ENCODE measurements at regions of chr7 and their contacts with region 1.

Region 1: GRCh38 chr7:106736508-106737201 is 75.7 kb upstream of the CCDC71L start:
- DNase-seq: peak; percentile 84
- ATAC-seq: peak; percentile 96
- H3K4me3 ChIP-seq: peak overlapping the region in 2 of 5 experiments; percentile 18 to 19
- H3K4me3 Mint-ChIP-seq: peak overlapping the region; percentile 66
- H3K27ac ChIP-seq: peak overlapping the region; percentile 22 to 66
- H3K27ac Mint-ChIP-seq: peak overlapping the region; percentile 87
- H3K4me1 ChIP-seq: peaks cover 16 to 17% of the 10 kb centered on the region in 2 donors
- H3K4me1 Mint-ChIP-seq: peaks cover 17% of the 10 kb centered on the region
- H3K27me3 ChIP-seq: no peaks in the 10 kb centered on the region
- H3K27me3 Mint-ChIP-seq: no peaks in the 10 kb centered on the region
- CTCF ChIP-seq: peak; percentile 79

Region 2: DNA sequence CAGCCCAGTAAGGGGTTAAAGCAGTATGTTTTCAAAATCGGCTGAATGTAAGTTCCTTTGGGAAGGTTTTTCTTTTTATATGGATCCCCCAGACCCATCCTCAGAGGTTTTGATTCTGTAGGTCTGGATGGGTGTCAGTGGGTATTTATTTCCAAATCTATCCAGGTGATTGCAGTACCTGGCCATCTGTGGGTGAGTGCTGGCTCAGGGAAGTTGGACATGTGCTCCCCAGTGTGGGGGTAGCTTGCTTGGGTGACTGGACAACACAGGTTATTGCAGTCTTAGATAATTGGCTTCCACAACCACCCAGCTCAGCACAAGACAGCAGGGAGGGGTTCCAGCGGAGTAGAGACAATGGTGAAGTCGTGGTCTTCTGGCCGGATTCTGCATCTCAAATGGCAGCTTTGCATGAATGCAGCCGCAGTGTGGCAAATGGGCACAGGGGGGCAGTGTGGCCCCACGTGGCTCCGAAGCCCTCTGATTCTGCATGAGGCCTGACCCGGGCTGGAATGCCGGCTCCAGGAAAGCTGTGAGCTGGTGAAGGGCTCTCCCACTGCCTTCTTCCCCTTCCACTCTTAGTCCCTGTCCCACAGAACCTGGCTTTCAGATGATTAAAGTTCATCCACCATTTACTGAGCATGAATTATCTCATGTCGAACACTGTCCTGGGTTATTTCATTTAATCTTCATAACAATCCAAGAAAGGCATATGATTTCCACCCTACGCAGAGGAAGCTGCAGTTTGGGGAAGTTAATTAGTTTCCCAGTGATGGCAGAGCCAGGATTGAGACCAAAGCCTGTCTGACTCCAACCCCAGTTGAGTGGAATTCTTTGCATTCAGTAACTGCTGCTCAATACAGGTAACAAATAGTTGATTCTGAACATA is 560.0 kb before region 1 on chr7:
- CTCF ChIA-PET with region 1: interaction called, 31 read pairs
- POLR2A ChIA-PET with region 1: no interaction called
- intact Hi-C with region 1: loop called (anchors 1 kb)
- DNase-seq: peak; percentile 74
- ATAC-seq: peak; percentile 69
- H3K4me3 ChIP-seq: no peak overlapping the region
- H3K4me3 Mint-ChIP-seq: no peak overlapping the region
- H3K27ac ChIP-seq: no peak overlapping the region
- H3K27ac Mint-ChIP-seq: no peak overlapping the region
- H3K4me1 ChIP-seq: peaks cover 5 to 13% of the 10 kb centered on the region in 2 donors
- H3K4me1 Mint-ChIP-seq: peaks cover 11% of the 10 kb centered on the region
- H3K27me3 ChIP-seq: peaks cover 0 to 6% (median 5%) of the 10 kb centered on the region in 4 experiments
- H3K27me3 Mint-ChIP-seq: peaks cover 13% of the 10 kb centered on the region
- CTCF ChIP-seq: peak; percentile 96

Region 3: DNA sequence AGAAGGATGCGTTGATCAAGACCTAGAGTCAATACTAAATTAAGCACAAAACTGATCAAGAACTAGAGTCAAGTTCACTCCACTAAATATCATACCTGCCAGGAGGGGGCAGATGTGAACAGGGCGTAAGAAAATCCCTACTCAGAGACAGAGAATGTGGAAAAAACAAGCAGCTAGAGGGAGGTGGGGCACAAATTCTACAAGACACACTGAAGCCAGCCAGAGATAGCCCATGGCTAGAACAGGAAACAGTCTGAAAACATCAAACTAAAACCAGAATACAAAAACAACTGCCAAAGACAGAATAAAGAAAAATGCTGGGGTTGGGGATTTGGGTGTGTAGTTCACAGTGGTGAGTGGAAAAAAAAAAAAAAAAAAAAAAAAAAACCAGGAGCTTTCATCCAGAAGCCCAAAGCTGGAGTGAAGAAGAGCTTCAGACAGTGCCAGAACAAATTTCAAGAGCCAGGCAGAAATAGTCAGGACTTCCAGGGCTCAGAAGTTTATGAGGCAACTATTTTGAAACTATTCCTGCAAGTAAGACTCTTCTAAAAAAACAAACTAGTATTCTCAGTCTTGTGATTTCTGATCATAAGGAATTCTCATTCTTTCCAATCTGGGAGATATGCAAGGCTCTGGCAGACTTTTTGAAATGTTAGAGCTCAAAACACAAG is 194.0 kb before region 1 on chr7:
- CTCF ChIA-PET with region 1: interaction called, 179 read pairs
- POLR2A ChIA-PET with region 1: interaction called, 8 read pairs
- intact Hi-C with region 1: loop called (anchors 1 kb)
- DNase-seq: peak; percentile 71
- ATAC-seq: peak; percentile 84
- H3K4me3 ChIP-seq: no peak overlapping the region
- H3K4me3 Mint-ChIP-seq: no peak overlapping the region
- H3K27ac ChIP-seq: no peak overlapping the region
- H3K27ac Mint-ChIP-seq: no peak overlapping the region
- H3K4me1 ChIP-seq: peaks cover 0 to 3% of the 10 kb centered on the region in 2 donors
- H3K4me1 Mint-ChIP-seq: peaks cover 4% of the 10 kb centered on the region
- H3K27me3 ChIP-seq: no peaks in the 10 kb centered on the region
- H3K27me3 Mint-ChIP-seq: peaks cover 3% of the 10 kb centered on the region
- CTCF ChIP-seq: peak; percentile 78

Region 4: DNA sequence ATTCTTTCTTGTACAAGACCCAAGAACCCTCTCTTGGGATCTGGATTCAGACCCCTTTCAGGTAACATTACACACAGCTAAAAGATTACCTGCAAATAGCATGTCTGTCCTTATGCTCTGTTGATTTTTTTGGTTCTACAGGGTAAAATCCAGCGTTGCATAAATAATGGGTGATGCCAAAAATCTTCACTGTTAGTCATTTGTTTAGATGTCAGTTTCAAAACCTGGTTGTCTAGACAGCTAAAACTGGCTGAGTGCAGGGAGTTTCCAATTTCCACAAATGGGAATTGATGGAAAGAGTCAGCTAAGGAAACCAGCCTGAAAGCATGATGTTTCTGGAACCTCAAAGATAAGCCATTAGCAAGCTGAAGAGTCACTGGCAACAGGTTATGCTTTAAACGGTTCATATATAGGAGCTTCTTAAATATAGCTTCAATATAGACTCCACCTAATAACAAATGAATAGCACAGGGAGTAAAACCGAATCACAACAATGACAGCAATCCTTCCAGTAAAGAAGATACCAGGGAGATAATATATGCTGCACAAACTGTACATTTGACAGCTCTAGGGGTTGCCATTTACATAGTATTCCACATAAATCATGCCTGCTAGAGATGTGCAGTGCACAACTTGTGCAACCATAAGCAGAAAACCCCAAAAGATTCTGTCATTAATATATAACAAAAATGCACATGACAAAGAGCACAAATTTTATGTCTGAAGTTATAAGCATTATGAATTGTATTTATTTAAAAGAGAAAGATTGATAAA is 96.1 kb before region 1 on chr7:
- CTCF ChIA-PET with region 1: interaction called, 11 read pairs
- POLR2A ChIA-PET with region 1: no interaction called
- intact Hi-C with region 1: no loop called
- DNase-seq: no peak
- ATAC-seq: no peak
- H3K4me3 ChIP-seq: no peak overlapping the region
- H3K4me3 Mint-ChIP-seq: no peak overlapping the region
- H3K27ac ChIP-seq: no peak overlapping the region
- H3K27ac Mint-ChIP-seq: no peak overlapping the region
- H3K4me1 ChIP-seq: peaks cover 4 to 10% of the 10 kb centered on the region in 2 donors
- H3K4me1 Mint-ChIP-seq: peaks cover 22% of the 10 kb centered on the region
- H3K27me3 ChIP-seq: peaks cover 0 to 3% (median 0%) of the 10 kb centered on the region in 4 experiments
- H3K27me3 Mint-ChIP-seq: peaks cover 1% of the 10 kb centered on the region
- CTCF ChIP-seq: no peak

Region 5: GRCh38 chr7:106679153-106679931 is 57.3 kb before region 1 on chr7:
- CTCF ChIA-PET with region 1: interaction called, 19 read pairs
- POLR2A ChIA-PET with region 1: no interaction called
- intact Hi-C with region 1: no loop called
- DNase-seq: peak; percentile 23
- ATAC-seq: peak; percentile 49
- H3K4me3 ChIP-seq: no peak overlapping the region
- H3K4me3 Mint-ChIP-seq: no peak overlapping the region
- H3K27ac ChIP-seq: no peak overlapping the region
- H3K27ac Mint-ChIP-seq: no peak overlapping the region
- H3K4me1 ChIP-seq: no peaks in the 10 kb centered on the region
- H3K4me1 Mint-ChIP-seq: peaks cover 9% of the 10 kb centered on the region
- H3K27me3 ChIP-seq: no peaks in the 10 kb centered on the region
- H3K27me3 Mint-ChIP-seq: no peaks in the 10 kb centered on the region
- CTCF ChIP-seq: no peak

Region 6: GRCh38 chr7:106793015-106793975 is 56.6 kb after region 1 on chr7:
- CTCF ChIA-PET with region 1: interaction called, 15 read pairs
- POLR2A ChIA-PET with region 1: no interaction called
- intact Hi-C with region 1: no loop called
- DNase-seq: peak; percentile 72
- ATAC-seq: peak; percentile 58
- H3K4me3 ChIP-seq: no peak overlapping the region
- H3K4me3 Mint-ChIP-seq: no peak overlapping the region
- H3K27ac ChIP-seq: no peak overlapping the region
- H3K27ac Mint-ChIP-seq: no peak overlapping the region
- H3K4me1 ChIP-seq: no peaks in the 10 kb centered on the region
- H3K4me1 Mint-ChIP-seq: no peaks in the 10 kb centered on the region
- H3K27me3 ChIP-seq: no peaks in the 10 kb centered on the region
- H3K27me3 Mint-ChIP-seq: no peaks in the 10 kb centered on the region
- CTCF ChIP-seq: peak; percentile 93